ENCODE measurements at regions of chr12 and their contacts with region 1.

Region 1: GRCh38 chr12:110100315-110100970 is 23.7 kb upstream of the IFT81 start:
- DNase-seq: peak; percentile 32 to 84 (median 46)
- ATAC-seq: peak; percentile 80
- H3K4me3 ChIP-seq: no peak overlapping the region
- H3K4me3 Mint-ChIP-seq: no peak overlapping the region
- H3K27ac ChIP-seq: no peak overlapping the region
- H3K27ac Mint-ChIP-seq: no peak overlapping the region
- H3K4me1 ChIP-seq: no peaks in the 10 kb centered on the region
- H3K4me1 Mint-ChIP-seq: peaks cover 13% of the 10 kb centered on the region
- H3K27me3 ChIP-seq: no peaks in the 10 kb centered on the region
- H3K27me3 Mint-ChIP-seq: no peaks in the 10 kb centered on the region
- CTCF ChIP-seq: peak; percentile 99

Region 2: DNA sequence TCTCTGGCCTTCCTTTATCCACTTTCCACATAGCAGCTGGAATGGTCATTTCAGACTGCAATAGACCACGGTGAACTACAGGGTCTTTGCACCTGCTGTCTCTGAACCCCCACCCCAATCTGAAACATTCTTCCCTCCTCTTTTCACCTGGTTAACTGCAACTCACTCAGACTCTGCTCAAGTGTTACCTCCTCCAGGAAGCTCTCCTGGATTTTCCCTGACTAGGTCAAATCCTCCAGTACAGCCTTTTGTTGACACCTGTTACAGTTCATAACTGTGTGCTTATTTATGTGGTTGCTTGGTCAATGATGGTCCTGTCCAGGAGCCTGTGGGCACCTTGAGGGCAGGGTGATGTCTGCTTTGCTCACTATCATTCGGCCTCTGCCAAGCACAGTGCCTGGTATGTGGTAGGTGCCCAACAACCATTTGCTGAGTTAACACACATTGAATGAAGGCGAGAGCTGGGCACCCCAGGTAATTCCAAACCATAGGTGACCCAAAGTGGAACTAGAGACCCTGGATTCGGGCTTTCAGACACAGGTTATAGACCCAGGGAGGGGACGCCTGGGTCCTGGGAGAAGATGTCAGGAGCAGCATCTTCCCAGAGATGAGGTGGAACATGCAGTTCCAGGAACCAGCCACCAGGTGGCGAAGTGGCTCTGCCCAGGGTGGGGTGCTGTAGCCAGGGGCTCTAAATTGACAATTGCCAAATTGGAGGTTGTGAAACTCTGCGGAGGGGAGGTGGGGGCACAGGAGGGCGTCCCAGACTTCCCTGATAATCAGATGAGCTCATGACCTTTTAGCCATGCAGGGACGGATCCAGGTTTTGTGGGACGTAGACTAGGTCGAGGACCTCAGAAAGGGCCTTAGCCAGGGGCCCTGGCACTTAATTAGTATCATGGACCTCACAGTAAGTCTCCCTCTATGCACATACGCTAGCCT is 295.4 kb before region 1 on chr12:
- CTCF ChIA-PET with region 1: no interaction called
- POLR2A ChIA-PET with region 1: no interaction called
- intact Hi-C with region 1: loop called in 1 of 2 experiments (anchors 5 kb)
- DNase-seq: peak; percentile 53 to 81 (median 62)
- ATAC-seq: peak; percentile 82
- H3K4me3 ChIP-seq: no peak overlapping the region
- H3K4me3 Mint-ChIP-seq: no peak overlapping the region
- H3K27ac ChIP-seq: no peak overlapping the region
- H3K27ac Mint-ChIP-seq: no peak overlapping the region
- H3K4me1 ChIP-seq: peaks cover 6% of the 10 kb centered on the region
- H3K4me1 Mint-ChIP-seq: no peaks in the 10 kb centered on the region
- H3K27me3 ChIP-seq: no peaks in the 10 kb centered on the region
- H3K27me3 Mint-ChIP-seq: peaks cover 5% of the 10 kb centered on the region
- CTCF ChIP-seq: peak; percentile 97

Region 3: GRCh38 chr12:110122929-110123328 is 22.5 kb after region 1 on chr12:
- CTCF ChIA-PET with region 1: no interaction called
- POLR2A ChIA-PET with region 1: no interaction called
- intact Hi-C with region 1: no loop called
- DNase-seq: no peak
- ATAC-seq: no peak
- H3K4me3 ChIP-seq: no peak overlapping the region
- H3K4me3 Mint-ChIP-seq: peak overlapping the region; percentile 25
- H3K27ac ChIP-seq: no peak overlapping the region
- H3K27ac Mint-ChIP-seq: no peak overlapping the region
- H3K4me1 ChIP-seq: peaks cover 12% of the 10 kb centered on the region
- H3K4me1 Mint-ChIP-seq: peaks cover 14% of the 10 kb centered on the region
- H3K27me3 ChIP-seq: no peaks in the 10 kb centered on the region
- H3K27me3 Mint-ChIP-seq: peaks cover 5% of the 10 kb centered on the region
- CTCF ChIP-seq: no peak

Region 4: DNA sequence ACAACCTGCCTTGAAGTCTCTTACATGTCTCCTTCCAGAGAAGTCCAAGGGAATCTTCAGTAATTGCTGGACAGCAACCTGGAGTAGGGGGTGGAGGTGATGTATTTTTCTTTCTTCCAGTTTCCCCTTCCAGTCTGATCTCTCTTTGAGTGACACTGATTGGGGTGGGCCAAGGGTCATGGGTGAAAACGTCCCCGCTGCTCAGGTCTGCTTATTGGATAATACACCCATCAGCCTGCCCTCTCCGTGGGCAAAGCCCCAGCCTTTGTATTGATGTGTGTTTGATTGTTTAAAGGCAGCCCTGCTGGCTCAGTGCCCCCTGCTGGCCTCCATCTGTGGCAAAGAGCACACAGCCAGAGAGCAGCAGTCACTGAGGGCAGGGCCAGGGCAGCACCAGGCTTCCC is 144.9 kb after region 1 on chr12:
- CTCF ChIA-PET with region 1: interaction called, 4 read pairs
- POLR2A ChIA-PET with region 1: no interaction called
- intact Hi-C with region 1: loop called (anchors 1 kb)
- DNase-seq: peak; percentile 16 to 68 (median 44)
- ATAC-seq: peak; percentile 63
- H3K4me3 ChIP-seq: no peak overlapping the region
- H3K4me3 Mint-ChIP-seq: no peak overlapping the region
- H3K27ac ChIP-seq: no peak overlapping the region
- H3K27ac Mint-ChIP-seq: no peak overlapping the region
- H3K4me1 ChIP-seq: no peaks in the 10 kb centered on the region
- H3K4me1 Mint-ChIP-seq: no peaks in the 10 kb centered on the region
- H3K27me3 ChIP-seq: no peaks in the 10 kb centered on the region
- H3K27me3 Mint-ChIP-seq: no peaks in the 10 kb centered on the region
- CTCF ChIP-seq: peak; percentile 65